Lower lobe of right lung (tissue), 2 donors: ENCODE measurements at regions of chr19 and their contacts with region 1.

Region 1: DNA sequence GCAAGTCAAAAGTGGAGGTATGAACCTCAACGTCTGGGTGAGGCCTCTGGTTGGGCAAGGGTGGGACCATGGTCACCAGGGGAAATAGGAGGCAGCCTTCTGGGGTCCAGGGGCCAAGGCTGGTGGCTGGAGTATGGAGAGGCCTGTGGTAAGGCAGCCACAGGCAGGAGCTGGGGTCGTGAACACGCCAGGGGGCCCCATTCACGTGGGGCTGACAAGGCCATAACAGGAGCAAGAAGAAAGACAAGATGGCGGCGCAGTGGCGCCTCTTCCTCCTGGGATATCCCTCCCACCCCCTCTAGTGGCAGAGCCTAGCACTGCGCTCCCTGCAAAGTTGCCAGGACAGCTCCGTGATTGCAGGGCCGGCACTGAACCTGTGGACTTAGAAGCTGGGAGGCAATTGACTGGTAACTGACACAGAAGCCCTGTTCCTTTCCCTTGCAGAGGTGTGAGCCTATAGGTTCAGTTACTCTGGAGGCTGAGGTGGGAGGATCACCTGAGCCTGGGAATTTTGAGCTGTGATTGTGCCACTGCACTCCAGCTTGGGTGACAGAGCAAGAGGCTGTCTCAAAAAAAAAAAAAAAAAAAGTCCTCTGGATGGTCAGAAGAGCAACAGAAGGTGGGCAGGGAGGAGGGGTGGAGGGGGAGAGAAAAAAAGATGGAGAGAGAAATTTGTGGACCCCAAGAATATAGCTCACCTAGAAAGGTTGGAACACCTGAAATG is 19.7 kb upstream of the EDDM13 start:
- DNase-seq: peak; percentile 91
- ATAC-seq: peak; percentile 94 to 95
- H3K4me3 ChIP-seq: no peak overlapping the region
- H3K27ac ChIP-seq: no peak overlapping the region
- H3K4me1 ChIP-seq: no peaks in the 10 kb centered on the region
- H3K27me3 ChIP-seq: no peaks in the 10 kb centered on the region
- CTCF ChIP-seq: peak; percentile 82

Region 2: DNA sequence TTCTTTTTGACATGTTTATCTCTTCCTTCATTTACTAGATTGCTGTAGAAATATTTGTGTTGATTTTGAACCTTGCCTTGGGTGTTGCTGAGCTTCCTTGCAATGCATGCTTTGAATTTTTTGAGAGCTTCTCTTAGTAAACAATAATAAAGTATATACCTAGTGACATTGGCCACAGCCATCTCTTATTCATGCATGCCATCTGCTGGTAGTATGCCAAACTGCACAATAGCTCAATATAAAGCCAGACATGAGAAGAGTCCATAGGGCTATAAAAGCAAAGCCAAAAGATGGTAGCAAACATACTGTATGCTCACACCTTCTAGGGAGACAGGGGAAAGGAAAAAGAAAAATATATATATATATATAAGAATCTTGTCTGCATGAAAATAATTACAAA is 80.6 kb after region 1 on chr19:
- intact Hi-C with region 1: loop called (anchors 10 kb)
- DNase-seq: no peak
- ATAC-seq: peak; percentile 65 to 66
- H3K4me3 ChIP-seq: no peak overlapping the region
- H3K27ac ChIP-seq: no peak overlapping the region
- H3K4me1 ChIP-seq: no peaks in the 10 kb centered on the region
- H3K27me3 ChIP-seq: no peaks in the 10 kb centered on the region
- CTCF ChIP-seq: peak; percentile 76